K562 (cell line): ENCODE measurements at regions of chr14 and their contacts with region 1.

Region 1: DNA sequence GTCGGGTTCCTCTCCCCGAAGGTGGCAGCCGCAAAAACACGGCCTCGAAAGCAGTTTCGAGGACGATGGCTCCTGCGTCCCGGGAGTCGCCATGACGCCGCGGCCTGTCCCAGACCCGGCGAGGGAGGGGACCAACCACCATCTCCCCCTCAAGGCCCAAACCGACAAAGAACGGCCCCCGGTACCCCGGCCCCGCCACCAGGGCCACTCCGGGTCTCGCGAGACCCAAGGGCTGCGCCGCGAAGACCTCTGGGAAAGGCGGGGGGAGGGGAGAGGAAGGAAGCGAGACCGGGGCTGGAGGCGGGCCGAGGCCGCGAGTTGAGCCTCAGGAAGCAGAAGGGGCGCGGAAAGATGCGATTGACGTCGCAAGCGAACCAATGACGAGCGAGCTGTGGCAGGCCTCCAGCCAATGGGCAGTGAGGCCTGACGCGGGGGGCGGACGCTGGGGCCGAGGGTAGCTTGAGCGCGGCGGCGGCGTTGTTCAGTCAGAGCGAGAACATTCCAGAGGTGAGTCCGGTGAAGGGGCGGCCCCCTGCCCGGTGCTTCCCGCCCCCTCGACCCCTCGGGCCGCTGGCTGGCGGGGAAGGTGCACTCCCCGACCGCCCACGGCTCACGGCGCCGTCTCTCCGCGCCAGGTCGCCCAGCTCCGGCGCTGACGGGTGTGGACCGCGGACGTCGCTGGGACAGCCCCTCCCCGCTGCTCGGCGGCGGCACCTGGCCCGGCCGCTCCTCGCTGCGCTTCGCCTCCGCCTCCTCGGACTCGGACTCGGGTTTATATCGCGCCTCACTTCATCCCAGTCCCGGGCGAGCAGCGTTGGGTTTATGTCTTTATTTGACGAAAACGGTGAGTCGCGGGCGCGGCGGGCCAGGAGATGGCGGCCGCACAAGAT is at the start of gene EIF5:
- DNase-seq: peak; percentile 91 to 97 (median 95)
- ATAC-seq: peak; percentile 94
- H3K4me3 ChIP-seq: peak within 1 kb of the TSS; percentile 96
- H3K27ac ChIP-seq: peak within 1 kb of the TSS; percentile 98
- H3K4me1 ChIP-seq: peaks cover 21 to 38% of the 10 kb centered on the region in 2 experiments; a peak in 4 of 5 replicates
- H3K27me3 ChIP-seq: no peaks in the 10 kb centered on the region
- CTCF ChIP-seq: peak in 2 of 3 experiments; percentile 1 to 20; a peak in 1 of 6 replicates
- EP300 ChIP-seq: no peak
- POLR2A ChIP-seq: peak; percentile 98
- RAD21 ChIP-seq: peak in 1 of 2 experiments; percentile 24; a peak in 2 of 4 replicates
- polyA plus RNA-seq, gene EIF5: 92.7 to 126 TPM

Region 2: GRCh38 chr14:103292426-103293374 is 41.3 kb before region 1 on chr14:
- CTCF ChIA-PET with region 1: no interaction called
- POLR2A ChIA-PET with region 1: interaction called, 7 read pairs
- in situ Hi-C with region 1: no loop called
- intact Hi-C with region 1: loop called (anchors 5 kb)
- DNase-seq: peak; percentile 70 to 80 (median 72)
- ATAC-seq: peak; percentile 94
- H3K4me3 ChIP-seq: no peak overlapping the region
- H3K27ac ChIP-seq: no peak overlapping the region
- H3K4me1 ChIP-seq: peaks cover 0 to 8% of the 10 kb centered on the region in 2 experiments; a peak in 4 of 5 replicates
- H3K27me3 ChIP-seq: 0 out of 5 replicates have a peak, but pooled peaks cover 0 to 1% of the 10 kb centered on the region in 2 experiments
- CTCF ChIP-seq: peak; percentile 77 to 85 (median 84)
- EP300 ChIP-seq: no peak
- POLR2A ChIP-seq: no peak
- RAD21 ChIP-seq: peak; percentile 86 to 96

Region 3: GRCh38 chr14:103346286-103346685 is 12.3 kb after region 1 on chr14:
- CTCF ChIA-PET with region 1: interaction called, 3 read pairs
- POLR2A ChIA-PET with region 1: interaction called, 64 read pairs
- in situ Hi-C with region 1: no loop called
- intact Hi-C with region 1: no loop called
- DNase-seq: no peak
- ATAC-seq: no peak
- H3K4me3 ChIP-seq: no peak overlapping the region
- H3K27ac ChIP-seq: no peak overlapping the region
- H3K4me1 ChIP-seq: peaks cover 0 to 5% of the 10 kb centered on the region in 2 experiments; a peak in 3 of 5 replicates
- H3K27me3 ChIP-seq: no peaks in the 10 kb centered on the region
- CTCF ChIP-seq: no peak
- EP300 ChIP-seq: no peak
- POLR2A ChIP-seq: no peak
- RAD21 ChIP-seq: no peak

Region 4: DNA sequence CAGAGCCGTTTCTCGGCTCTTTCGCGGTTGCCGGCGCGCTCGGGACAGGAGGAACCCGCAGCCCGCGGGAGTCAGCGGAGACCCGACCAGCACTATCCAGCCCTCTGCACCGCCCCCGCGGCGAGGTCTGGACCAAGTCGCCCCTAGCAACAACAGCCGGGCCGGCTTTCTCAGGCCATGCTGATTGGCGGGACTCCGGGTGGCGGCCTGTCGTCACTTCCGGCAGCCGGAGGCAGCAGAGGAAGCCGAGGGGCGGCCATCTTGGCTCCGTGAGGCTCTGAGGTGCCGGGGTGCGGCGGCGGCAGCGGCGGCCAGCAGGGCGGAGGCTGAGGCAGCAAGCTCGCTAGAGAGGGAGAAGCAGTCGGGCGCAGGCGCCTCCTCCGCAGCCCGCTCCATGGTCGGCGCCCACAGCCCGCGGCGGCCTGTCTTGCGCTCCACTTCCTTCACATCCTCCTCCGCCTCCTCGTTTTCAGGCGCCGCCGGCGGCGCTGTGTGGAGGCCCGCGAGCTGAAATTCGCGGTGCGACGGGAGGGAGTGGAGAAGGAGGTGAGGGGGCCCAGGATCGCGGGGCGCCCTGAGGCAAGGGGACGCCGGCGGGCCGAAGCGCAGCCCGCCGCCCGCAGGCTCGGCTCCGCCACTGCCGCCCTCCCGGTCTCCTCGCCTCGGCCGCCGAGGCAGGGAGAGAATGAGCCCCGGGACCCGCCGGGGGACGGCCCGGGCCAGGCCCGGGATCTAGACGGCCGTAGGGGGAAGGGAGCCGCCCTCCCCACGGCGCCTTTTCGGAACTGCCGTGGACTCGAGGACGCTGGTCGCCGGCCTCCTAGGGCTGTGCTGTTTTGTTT is 51.4 kb after region 1 on chr14 and contains the start of gene MARK3:
- CTCF ChIA-PET with region 1: no interaction called
- POLR2A ChIA-PET with region 1: interaction called, 19 read pairs
- in situ Hi-C with region 1: no loop called
- intact Hi-C with region 1: loop called (anchors 5 kb)
- DNase-seq: peak; percentile 93 to 96 (median 94)
- ATAC-seq: peak; percentile 94
- H3K4me3 ChIP-seq: peak within 1 kb of the TSS; percentile 96
- H3K27ac ChIP-seq: peak within 1 kb of the TSS; percentile 92
- H3K4me1 ChIP-seq: peaks cover 12 to 27% of the 10 kb centered on the region in 2 experiments; a peak in 4 of 5 replicates
- H3K27me3 ChIP-seq: no peaks in the 10 kb centered on the region
- CTCF ChIP-seq: no peak
- EP300 ChIP-seq: no peak
- POLR2A ChIP-seq: peak; percentile 83
- RAD21 ChIP-seq: no peak; a peak in 1 of 4 replicates
- polyA plus RNA-seq, gene MARK3: 10.1 to 18.2 TPM